ENCODE measurements at regions of chr17 and their contacts with region 1.

Region 1: GRCh38 chr17:43852571-43852970 is 5.6 kb downstream of the CD300LG start:
- H3K4me3 ChIP-seq: no peak overlapping the region
- H3K27ac ChIP-seq: no peak overlapping the region
- H3K4me1 ChIP-seq: no peaks in the 10 kb centered on the region
- CTCF ChIP-seq: no peak

Region 2: DNA sequence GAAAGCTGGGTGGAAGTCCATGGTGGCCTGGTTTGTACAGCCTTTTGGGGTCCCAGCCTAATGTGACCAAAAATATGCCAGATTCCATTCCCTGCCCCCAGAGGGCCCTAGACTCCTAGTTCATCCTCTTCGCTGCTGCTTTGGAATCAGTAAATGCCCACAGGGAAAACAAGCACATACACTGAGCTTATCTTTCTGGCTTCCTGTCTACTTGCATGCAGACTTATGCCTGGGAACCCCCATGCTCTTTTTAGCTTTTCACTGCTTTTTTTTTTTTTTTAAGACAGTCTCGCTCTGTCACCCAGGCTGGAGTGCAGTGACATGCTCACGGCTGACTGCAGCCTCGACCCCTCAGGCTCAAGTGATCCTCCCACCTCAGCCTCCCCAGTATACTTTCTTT is 11.8 kb before region 1 on chr17:
- CTCF ChIA-PET with region 1: interaction called, 56 read pairs
- POLR2A ChIA-PET with region 1: no interaction called
- H3K4me3 ChIP-seq: no peak overlapping the region
- H3K27ac ChIP-seq: no peak overlapping the region
- H3K4me1 ChIP-seq: peaks cover 14% of the 10 kb centered on the region
- CTCF ChIP-seq: no peak

Region 3: DNA sequence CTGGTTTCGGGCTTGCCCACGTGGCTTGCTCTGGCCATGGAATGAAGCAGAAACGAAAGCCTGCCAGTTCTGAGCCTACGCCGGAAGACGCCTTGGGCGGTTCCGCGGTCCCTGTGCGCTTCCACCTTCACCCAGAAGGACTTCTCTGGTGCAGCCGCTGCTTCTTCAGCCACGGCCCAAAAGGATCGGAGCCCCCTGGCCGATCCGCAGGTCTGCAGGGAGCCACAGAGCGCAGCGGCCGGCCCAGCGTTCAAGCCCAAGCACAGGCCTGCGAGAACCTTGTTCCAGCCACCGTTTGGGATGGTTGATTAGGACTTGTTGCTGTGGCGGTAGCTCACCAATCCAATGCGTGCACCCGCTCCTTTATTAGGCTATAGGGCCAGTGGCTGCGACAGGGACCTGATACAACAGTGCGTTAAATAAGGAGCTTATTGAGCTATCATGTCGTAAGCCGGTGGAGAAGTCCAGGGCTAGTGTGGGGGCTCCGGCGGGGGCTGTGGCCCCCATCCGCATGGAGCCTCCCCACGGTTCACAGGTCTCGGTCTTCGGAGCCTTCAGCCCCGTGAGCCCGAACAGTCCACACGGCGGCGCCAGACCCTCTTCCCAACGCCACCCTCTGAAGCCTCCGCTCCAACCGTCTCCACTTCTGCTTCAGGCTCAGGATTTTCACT is 64.9 kb after region 1 on chr17:
- CTCF ChIA-PET with region 1: no interaction called
- POLR2A ChIA-PET with region 1: no interaction called
- H3K4me3 ChIP-seq: no peak overlapping the region
- H3K27ac ChIP-seq: no peak overlapping the region
- H3K4me1 ChIP-seq: no peaks in the 10 kb centered on the region
- CTCF ChIP-seq: no peak

Measured in HEK293 (cell line).